Cardiac septum (tissue), 1 donor: ENCODE measurements at regions of chr7 and their contacts with region 1.

Region 1: DNA sequence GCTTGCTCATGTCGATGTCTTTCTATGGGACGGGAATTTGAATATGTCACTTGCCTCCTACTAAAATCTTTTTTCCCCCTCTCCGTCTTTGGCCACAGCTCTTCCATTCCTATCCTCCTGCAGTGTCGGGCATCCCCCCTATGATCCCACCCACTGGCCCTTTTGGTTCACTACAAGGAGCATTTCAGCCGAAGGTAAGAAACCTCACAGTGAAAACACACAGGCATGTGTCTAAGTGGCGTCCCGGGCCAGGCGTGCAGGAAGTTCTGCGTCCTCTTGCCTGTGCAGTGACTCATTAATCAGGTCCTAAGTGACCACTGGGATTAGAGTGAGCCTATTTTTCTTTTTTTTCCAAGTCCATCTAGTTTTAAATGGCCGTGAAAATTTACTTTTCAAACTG is 360.5 kb upstream of the GALNT17 start:
- DNase-seq: no peak

Region 2: DNA sequence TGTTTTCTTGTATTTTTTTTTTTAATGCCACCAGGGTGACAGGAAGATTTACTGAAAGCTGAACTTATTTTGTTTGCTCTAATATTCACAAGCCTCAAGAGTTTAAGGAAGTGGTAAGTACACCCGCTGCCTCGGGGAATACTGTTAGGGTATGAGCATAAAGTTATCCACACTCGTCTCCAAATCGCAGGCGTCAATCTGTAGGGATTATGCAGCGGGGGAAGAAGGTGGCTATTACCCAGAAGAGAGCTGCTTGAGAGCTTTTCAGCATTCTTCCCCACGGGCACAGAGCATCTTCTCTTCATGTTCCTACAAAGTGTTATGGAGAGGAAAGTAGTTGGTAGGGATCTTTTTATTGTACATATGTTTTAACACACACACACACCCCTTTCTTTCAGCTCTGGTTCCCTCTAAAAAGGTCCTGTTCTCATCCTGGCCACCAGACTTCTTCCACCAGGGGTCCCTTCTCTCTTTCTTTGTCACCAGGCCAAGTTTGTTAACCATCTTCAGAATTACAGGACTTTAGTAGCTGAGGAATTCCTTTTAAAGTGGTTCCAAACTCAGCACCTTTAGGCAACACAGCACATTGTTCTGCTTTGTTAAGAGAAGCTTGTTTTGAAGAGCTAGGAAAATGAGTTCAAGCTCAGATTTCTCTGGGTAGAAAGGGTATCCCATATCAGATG is 51.1 kb before region 1 on chr7:
- intact Hi-C with region 1: loop called (anchors 5 kb)
- DNase-seq: no peak

Region 3: DNA sequence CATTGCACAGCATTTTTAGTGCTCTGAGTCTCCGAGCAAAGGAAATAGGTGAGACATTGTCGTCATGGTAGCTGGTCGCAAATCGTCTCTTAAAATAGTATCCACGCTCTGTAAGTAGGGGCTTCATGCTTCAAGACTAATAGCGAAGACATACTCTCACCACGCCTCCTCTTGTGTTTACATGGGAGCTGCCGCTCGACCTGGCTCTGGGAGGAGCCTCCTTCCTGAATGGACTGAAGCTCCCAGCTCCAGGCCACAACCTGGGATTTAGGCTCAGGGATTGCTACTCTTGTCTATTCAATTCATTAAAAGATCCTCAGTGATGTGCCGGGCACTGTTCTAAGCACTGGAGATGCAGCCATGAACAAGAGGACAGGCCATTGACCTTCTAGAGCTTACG is 164.4 kb after region 1 on chr7:
- intact Hi-C with region 1: no loop called
- DNase-seq: no peak